H1 (cell line): ENCODE measurements at regions of chr11 and their contacts with region 1.

Region 1: DNA sequence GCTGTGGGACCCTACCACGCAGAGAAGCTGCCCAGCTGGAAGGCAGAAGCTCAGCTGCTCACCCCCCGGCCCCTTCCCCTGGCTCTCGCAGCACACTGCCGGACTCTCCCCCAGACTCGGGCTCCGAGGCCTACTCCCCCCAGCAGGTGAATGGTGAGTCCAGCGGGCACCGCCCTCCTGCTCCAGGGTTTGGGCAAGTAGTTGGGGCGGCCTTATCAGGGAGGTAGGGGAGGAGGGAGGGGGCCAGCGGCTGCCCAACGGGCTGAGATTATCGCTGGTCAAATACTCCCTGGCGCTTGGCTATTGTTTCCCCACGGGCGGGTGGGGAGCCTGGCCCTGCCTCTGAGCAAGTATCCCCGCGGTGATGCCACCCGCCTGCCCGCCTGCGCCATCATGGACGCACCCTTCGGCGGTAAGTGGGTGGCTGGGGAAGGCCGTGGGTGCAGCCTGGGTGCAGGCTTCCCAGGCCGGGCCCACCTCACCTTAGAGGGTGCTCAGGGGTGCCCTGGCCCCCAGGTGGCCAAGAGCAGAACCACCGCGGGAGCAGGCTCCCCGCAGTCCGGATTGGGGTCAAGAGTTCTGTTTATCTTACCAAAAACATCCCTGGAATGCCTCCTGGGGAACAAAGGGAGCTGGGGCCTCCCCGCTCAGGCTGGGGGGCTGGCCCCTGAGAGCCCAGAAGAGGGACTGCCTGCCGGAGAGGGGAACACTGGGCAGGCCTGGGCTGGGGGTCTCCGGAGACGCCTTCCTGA is 16.9 kb downstream of the MYRF start:
- DNase-seq: no peak
- H3K4me3 ChIP-seq: no peak overlapping the region
- H3K27ac ChIP-seq: no peak overlapping the region; the same call in 1 of the 2 replicates
- H3K4me1 ChIP-seq: peaks cover 0 to 21% (median 15%) of the 10 kb centered on the region in 4 experiments; a peak in 5 of 7 replicates
- H3K27me3 ChIP-seq: no peaks in the 10 kb centered on the region
- CTCF ChIP-seq: peak; percentile 36 to 44 (median 43)
- EP300 ChIP-seq: no peak
- POLR2A ChIP-seq: no peak
- RAD21 ChIP-seq: no peak; a peak in 1 of 4 replicates

Region 2: DNA sequence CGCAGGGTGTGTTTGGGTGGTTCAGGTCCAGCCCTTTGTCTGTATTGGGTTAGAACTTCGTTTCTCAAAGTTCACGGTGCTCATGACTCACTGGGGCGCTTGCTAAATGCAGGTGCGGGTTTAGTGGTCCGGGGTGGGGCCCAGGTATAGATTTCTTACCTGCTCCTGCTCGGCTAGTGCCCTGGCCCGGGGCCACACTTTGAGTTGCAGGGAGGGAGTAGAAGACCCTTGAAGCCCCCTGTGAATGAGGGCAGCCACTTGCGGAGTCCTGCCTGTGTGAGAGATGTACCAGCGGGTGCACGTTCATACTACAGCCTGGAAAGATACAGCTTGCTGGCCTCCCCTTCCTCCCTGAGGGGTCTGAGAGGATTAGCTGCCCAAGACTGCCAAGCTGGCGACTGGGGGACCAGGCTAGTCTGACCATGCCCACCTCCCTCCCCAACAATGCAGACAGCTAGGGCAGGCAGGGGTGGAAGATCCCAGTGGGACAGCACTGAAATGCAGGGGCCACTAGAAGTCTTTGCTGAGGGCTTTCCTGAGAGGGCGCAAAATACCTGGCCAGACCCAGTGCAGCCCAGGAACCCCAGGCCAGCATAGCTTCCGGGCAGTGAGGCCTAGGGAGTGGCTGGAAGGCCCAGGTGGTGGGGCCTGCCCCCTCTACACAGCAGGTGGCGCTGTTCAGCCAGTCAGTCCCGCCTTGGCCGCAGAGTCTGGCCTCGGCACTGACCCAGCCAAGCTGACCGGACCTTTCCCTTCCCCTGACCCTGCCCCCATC is 22.0 kb before region 1 on chr11:
- CTCF ChIA-PET with region 1: interaction called, 52 read pairs
- POLR2A ChIA-PET with region 1: interaction called, 6 read pairs
- DNase-seq: peak; percentile 41 to 94
- H3K4me3 ChIP-seq: no peak overlapping the region
- H3K27ac ChIP-seq: no peak overlapping the region
- H3K4me1 ChIP-seq: peaks cover 6 to 26% (median 10%) of the 10 kb centered on the region in 4 experiments
- H3K27me3 ChIP-seq: peaks cover 0 to 6% (median 5%) of the 10 kb centered on the region in 4 experiments; a peak in 5 of 7 replicates
- CTCF ChIP-seq: peak in 2 of 3 experiments; percentile 87 to 95; a peak in 3 of 4 replicates
- EP300 ChIP-seq: no peak
- POLR2A ChIP-seq: no peak
- RAD21 ChIP-seq: peak; percentile 71 to 78

Region 3: GRCh38 chr11:61756452-61757212 is 12.7 kb before region 1 on chr11:
- CTCF ChIA-PET with region 1: interaction called, 52 read pairs
- POLR2A ChIA-PET with region 1: interaction called, 6 read pairs
- DNase-seq: no peak
- H3K4me3 ChIP-seq: no peak overlapping the region
- H3K27ac ChIP-seq: no peak overlapping the region
- H3K4me1 ChIP-seq: peaks cover 0 to 19% (median 13%) of the 10 kb centered on the region in 4 experiments; a peak in 6 of 7 replicates
- H3K27me3 ChIP-seq: peaks cover 4 to 21% (median 15%) of the 10 kb centered on the region in 4 experiments
- CTCF ChIP-seq: no peak
- EP300 ChIP-seq: no peak
- POLR2A ChIP-seq: no peak
- RAD21 ChIP-seq: no peak

Region 4: GRCh38 chr11:61908730-61909315 is 139.5 kb after region 1 on chr11:
- CTCF ChIA-PET with region 1: no interaction called
- POLR2A ChIA-PET with region 1: no interaction called
- DNase-seq: no peak
- H3K4me3 ChIP-seq: no peak overlapping the region
- H3K27ac ChIP-seq: no peak overlapping the region
- H3K4me1 ChIP-seq: peaks cover 0 to 27% (median 17%) of the 10 kb centered on the region in 4 experiments; a peak in 6 of 7 replicates
- H3K27me3 ChIP-seq: 0 out of 7 replicates have a peak, but pooled peaks cover 0 to 1% (median 0%) of the 10 kb centered on the region in 4 experiments
- CTCF ChIP-seq: no peak
- EP300 ChIP-seq: no peak
- POLR2A ChIP-seq: no peak
- RAD21 ChIP-seq: no peak